AG04449 (cell line): ENCODE measurements at regions of chr11 and their contacts with region 1.

Region 1: DNA sequence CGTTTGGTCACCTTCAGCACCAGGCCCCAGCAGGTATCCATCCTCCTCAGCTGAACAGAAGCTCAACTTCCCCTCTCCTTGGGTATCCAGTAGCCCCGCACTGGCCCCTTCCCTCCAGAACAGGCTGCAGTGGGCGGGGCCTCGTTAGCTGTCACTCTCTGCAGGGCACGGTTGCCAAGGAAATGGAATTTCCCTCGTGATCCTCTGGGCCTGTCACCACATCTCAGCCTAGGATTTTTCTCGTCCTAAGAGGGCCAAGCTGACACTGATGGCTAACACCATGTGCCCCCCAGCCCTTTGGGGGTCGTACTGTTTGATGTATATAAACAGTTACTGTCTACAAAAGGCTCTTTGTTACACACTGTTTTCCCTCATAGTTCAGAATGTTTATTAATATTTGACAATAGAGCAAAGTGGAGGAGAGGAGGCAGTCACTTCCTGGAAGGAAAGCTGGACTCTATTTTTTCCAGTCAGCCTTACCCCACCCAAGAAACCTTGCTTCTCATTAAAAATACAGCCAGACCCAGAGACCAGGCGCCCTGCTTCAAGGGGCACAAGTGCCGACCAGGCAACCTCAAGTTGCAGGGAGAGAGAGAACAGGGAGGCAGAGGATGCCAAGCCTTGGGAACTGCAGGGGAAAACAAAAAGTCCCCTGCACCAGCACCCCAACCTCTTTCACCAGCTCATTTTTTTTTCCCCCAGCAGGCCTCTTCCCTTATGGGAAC is 44.5 kb downstream of the FEZ1 start:
- DNase-seq: no peak
- H3K4me3 ChIP-seq: no peak overlapping the region
- CTCF ChIP-seq: no peak

Region 2: DNA sequence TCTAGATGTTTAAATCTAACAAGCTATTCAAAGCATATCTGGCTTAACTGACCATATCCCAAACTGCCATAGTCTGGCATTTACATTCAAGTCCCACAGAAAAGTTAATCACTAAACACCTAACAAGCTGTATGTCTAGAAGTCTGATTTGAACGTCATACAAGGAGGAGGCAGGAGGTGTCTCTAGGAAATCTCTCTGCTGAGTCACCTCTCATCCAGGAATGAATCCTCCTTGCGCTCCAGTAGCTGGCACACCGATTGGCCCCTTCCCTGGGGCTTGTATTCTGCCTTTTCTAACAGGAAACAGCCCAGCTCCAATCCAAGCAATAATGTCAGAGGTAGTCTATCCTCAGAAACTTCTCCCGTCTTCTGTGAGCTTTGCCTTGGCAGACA is 12.7 kb after region 1 on chr11:
- CTCF ChIA-PET with region 1: interaction called, 21 read pairs
- POLR2A ChIA-PET with region 1: no interaction called
- DNase-seq: no peak
- H3K4me3 ChIP-seq: no peak overlapping the region
- CTCF ChIP-seq: no peak

Region 3: GRCh38 chr11:125481531-125481930 is 30.0 kb after region 1 on chr11:
- CTCF ChIA-PET with region 1: no interaction called
- POLR2A ChIA-PET with region 1: no interaction called
- DNase-seq: no peak
- H3K4me3 ChIP-seq: no peak overlapping the region
- CTCF ChIP-seq: no peak